ENCODE measurements at regions of chr7 and their contacts with region 1.

Region 1: GRCh38 chr7:22559829-22560489 is 60.0 kb upstream of the STEAP1B start:
- DNase-seq: peak; percentile 77
- H3K4me3 ChIP-seq: peak overlapping the region in 1 of 2 experiments; percentile 11; a peak in 1 of 4 replicates
- H3K27ac ChIP-seq: peak overlapping the region in 1 of 2 experiments; percentile 89; a peak in 1 of 4 replicates
- H3K4me1 ChIP-seq: peaks cover 4 to 19% of the 10 kb centered on the region in 2 experiments; a peak in 2 of 4 replicates
- H3K27me3 ChIP-seq: peaks cover 21% of the 10 kb centered on the region; the same call in 1 of the 2 replicates
- CTCF ChIP-seq: peak; percentile 100
- EP300 ChIP-seq: no peak
- RAD21 ChIP-seq: peak; percentile 96

Region 2: GRCh38 chr7:22549667-22550513 is 10.1 kb before region 1 on chr7:
- CTCF ChIA-PET with region 1: interaction called, 26 read pairs
- POLR2A ChIA-PET with region 1: no interaction called
- DNase-seq: peak; percentile 73
- H3K4me3 ChIP-seq: peak overlapping the region in 1 of 2 experiments; percentile 16; a peak in 2 of 4 replicates
- H3K27ac ChIP-seq: no peak overlapping the region
- H3K4me1 ChIP-seq: peaks cover 0 to 3% of the 10 kb centered on the region in 2 experiments; a peak in 2 of 4 replicates
- H3K27me3 ChIP-seq: peaks cover 88% of the 10 kb centered on the region
- CTCF ChIP-seq: peak; percentile 89
- EP300 ChIP-seq: no peak
- RAD21 ChIP-seq: peak; percentile 68

Region 3: GRCh38 chr7:22697876-22698606 is 138.1 kb after region 1 on chr7:
- CTCF ChIA-PET with region 1: no interaction called
- POLR2A ChIA-PET with region 1: no interaction called
- DNase-seq: no peak
- H3K4me3 ChIP-seq: no peak overlapping the region
- H3K27ac ChIP-seq: no peak overlapping the region
- H3K4me1 ChIP-seq: no peaks in the 10 kb centered on the region
- H3K27me3 ChIP-seq: peaks cover 15% of the 10 kb centered on the region; the same call in 1 of the 2 replicates
- CTCF ChIP-seq: no peak
- EP300 ChIP-seq: no peak
- RAD21 ChIP-seq: no peak

Region 4: DNA sequence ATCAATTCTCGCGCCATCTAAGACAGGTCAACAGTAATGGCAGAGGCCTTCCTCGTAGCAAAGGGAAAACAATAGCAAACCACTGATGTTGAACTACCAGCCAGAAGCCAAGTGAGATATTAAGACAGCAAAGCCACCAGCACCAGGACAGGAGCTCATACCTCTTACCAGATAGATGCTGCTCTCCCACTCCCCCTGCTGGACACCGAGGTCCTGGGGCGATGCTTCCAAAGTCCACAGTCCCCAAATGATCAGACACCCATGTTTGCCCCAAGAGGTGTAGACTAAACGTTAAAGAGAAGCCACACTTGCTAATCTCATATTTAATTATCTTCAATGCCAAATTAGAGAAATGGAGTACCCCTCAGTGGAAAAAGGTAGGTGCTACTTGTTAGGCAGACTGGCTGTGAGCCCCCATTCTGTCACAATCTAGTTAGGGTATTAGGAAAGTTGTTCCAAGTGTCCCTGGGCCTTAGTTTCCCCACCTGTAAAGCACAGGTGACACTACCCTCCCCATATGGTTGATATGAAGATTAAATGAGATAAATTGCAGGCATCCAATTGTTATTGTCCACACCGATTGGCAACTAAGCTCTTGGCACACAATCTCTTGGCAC is 222.8 kb after region 1 on chr7:
- CTCF ChIA-PET with region 1: interaction called, 29 read pairs
- POLR2A ChIA-PET with region 1: interaction called, 3 read pairs
- DNase-seq: peak; percentile 76
- H3K4me3 ChIP-seq: no peak overlapping the region
- H3K27ac ChIP-seq: no peak overlapping the region
- H3K4me1 ChIP-seq: no peaks in the 10 kb centered on the region; a peak in 3 of 4 replicates
- H3K27me3 ChIP-seq: no peaks in the 10 kb centered on the region
- CTCF ChIP-seq: peak; percentile 92
- EP300 ChIP-seq: no peak
- RAD21 ChIP-seq: peak; percentile 62

Region 5: DNA sequence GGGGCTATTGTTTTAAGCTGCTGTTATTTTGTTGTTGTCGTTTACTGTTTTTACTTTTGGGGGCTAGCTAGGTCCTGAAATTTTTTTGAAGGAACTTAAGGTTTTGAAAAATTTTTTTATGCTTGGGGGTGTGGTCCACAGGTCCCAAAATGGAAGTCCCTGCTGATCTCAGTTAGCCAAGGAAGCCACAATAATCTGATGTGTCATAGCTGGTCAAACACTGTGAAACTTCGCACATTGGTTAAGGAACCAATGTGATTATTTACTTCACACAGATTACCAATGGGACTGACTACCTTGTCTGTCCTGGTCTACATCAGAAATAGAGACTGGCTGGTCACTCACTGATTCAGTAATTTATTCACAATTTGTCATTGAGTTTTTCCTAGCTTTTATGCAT is 483.5 kb after region 1 on chr7:
- CTCF ChIA-PET with region 1: interaction called, 11 read pairs
- POLR2A ChIA-PET with region 1: no interaction called
- DNase-seq: no peak
- H3K4me3 ChIP-seq: no peak overlapping the region
- H3K27ac ChIP-seq: no peak overlapping the region
- H3K4me1 ChIP-seq: no peaks in the 10 kb centered on the region
- H3K27me3 ChIP-seq: no peaks in the 10 kb centered on the region
- CTCF ChIP-seq: no peak
- EP300 ChIP-seq: no peak
- RAD21 ChIP-seq: no peak